Activated CD4-positive, alpha-beta T cell treated with anti-CD3 and anti-CD28 coated beads, Interleukin-2, amount 10 ng/mL, durations not matched to agents 7 days and 5 days (primary cell): ENCODE measurements at regions of chr11 and their contacts with region 1.

Region 1: DNA sequence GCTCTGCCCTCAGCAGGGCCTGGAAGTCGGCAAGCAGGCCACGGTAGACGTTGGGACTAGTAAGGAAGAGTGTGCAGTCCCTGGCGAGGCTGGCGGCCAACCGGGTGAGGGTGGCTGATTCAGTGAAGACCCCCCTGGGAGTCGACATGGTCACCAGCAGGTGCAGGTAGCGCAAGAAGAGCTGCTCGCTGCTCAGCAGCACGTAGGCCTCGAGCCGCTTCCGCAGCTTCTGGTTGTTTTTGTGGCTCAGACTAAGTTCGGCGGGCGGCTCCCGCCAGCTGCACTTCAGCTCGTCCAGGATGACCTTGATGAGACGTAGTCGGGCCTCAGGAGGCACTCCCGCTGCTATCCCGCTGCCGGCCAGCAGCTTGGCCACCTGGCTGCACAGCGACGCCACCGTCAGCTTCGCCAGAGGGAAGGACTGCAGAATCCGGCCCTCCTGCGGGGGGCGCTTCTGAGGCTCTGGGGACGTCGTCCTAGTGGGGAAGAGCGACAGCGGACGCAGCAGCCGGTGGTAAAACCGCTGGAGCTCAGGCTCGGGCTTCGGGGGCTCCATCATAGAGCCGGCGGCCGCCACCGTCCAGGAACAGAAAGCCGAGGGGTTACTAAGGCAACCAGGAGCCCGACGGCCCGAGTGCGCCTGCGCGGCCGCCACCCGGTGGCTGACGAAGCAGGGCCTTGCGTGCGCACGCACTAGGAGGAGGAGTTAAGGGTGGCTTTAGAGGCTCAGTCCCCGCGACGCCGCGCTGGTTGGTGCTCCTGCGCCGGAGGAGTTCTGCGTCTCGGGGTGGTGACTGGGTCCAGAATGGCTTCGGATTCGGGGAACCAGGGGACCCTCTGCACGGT is at the starts of genes CCDC87 and CCS:
- DNase-seq: peak; percentile 99
- H3K4me3 Mint-ChIP-seq: peak within 1 kb of the TSS; percentile 98
- H3K27ac Mint-ChIP-seq: peak within 1 kb of the TSS; percentile 95
- H3K4me1 Mint-ChIP-seq: peaks cover 34% of the 10 kb centered on the region
- H3K27me3 Mint-ChIP-seq: no peaks in the 10 kb centered on the region
- total RNA-seq, gene CCDC87: 0.08 TPM in 1 of 2 experiments, not detected in the other
- total RNA-seq, gene CCS: 28.8 to 32.6 TPM

Region 2: DNA sequence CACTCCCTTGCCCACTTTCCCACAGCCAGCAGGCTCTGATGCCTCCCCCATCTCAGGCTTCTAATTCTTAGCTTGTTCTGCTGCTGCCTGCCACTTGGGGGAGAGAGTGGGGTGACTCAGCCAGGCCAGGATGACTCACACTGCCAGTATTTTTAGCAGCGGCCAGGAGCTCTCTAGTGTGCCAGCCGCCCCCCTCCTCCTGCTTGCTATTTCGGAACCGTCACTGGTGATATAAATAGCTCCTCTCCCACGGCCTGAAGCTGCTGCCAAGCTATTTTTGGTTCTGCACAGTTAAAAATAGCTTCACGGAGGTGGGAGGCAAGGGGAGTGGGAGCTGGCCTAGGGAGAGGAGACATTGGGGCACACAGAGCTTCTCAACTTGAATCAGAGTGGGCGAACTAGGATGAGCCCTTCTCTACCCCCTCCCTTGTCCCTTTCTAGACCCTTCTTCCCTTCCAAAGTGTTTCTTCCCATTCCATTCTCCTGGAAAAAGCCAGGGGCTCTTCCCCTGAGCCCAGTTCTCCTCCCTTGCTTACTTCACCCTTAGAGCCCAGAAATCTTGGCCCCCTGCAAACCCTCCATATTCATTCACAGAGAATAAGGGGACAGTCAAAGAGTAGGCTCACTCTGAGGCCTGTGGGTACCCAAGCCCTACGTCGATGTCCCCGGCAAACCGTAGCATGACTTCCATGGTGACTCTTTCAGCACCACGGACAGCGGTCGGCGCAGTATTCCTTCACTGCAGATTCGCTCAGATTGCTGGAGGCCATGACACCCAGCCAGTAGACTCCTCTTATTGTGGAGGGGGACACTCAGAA is 174.3 kb before region 1 on chr11:
- CTCF ChIA-PET with region 1: no interaction called
- POLR2A ChIA-PET with region 1: no interaction called
- DNase-seq: peak; percentile 74
- H3K4me3 Mint-ChIP-seq: no peak overlapping the region
- H3K27ac Mint-ChIP-seq: no peak overlapping the region
- H3K4me1 Mint-ChIP-seq: peaks cover 21% of the 10 kb centered on the region
- H3K27me3 Mint-ChIP-seq: peaks cover 45% of the 10 kb centered on the region

Region 3: GRCh38 chr11:66523462-66524010 is 69.1 kb before region 1 on chr11:
- CTCF ChIA-PET with region 1: no interaction called
- POLR2A ChIA-PET with region 1: no interaction called
- DNase-seq: no peak
- H3K4me3 Mint-ChIP-seq: no peak overlapping the region
- H3K27ac Mint-ChIP-seq: no peak overlapping the region
- H3K4me1 Mint-ChIP-seq: no peaks in the 10 kb centered on the region
- H3K27me3 Mint-ChIP-seq: no peaks in the 10 kb centered on the region

Region 4: GRCh38 chr11:66607126-66607834 is 14.6 kb after region 1 on chr11:
- CTCF ChIA-PET with region 1: interaction called, 10 read pairs
- POLR2A ChIA-PET with region 1: no interaction called
- DNase-seq: no peak
- H3K4me3 Mint-ChIP-seq: no peak overlapping the region
- H3K27ac Mint-ChIP-seq: no peak overlapping the region
- H3K4me1 Mint-ChIP-seq: peaks cover 11% of the 10 kb centered on the region
- H3K27me3 Mint-ChIP-seq: no peaks in the 10 kb centered on the region